Heart right ventricle (tissue), 16 donors: ENCODE measurements at regions of chr18 and their contacts with region 1.

Region 1: GRCh38 chr18:45248240-45248903 is 366.9 kb upstream of the SLC14A2 start:
- DNase-seq: peak in 1 of 2 donors; percentile 62
- ATAC-seq: peak; percentile 59 to 93 (median 85)
- H3K4me3 ChIP-seq: no peak overlapping the region
- H3K27ac ChIP-seq: peak overlapping the region; percentile 19 to 89 (median 76)
- H3K4me1 ChIP-seq: peaks cover 7 to 56% (median 44%) of the 10 kb centered on the region in 9 donors
- H3K27me3 ChIP-seq: no peaks in the 10 kb centered on the region
- CTCF ChIP-seq: no peak

Region 2: GRCh38 chr18:45320724-45321123 is 72.4 kb after region 1 on chr18:
- intact Hi-C with region 1: loop called in 1 of 10 experiments (anchors 2 kb)
- DNase-seq: no peak
- ATAC-seq: peak in 3 of 8 donors; percentile 9 to 38 (median 12)
- H3K4me3 ChIP-seq: no peak overlapping the region
- H3K27ac ChIP-seq: no peak overlapping the region
- H3K4me1 ChIP-seq: peaks cover 0 to 22% (median 7%) of the 10 kb centered on the region in 9 donors
- H3K27me3 ChIP-seq: no peaks in the 10 kb centered on the region
- CTCF ChIP-seq: no peak

Region 3: GRCh38 chr18:45517181-45517741 is 268.9 kb after region 1 on chr18:
- intact Hi-C with region 1: loop called in 1 of 10 experiments (anchors 10 kb)
- DNase-seq: peak in 1 of 2 donors; percentile 41
- ATAC-seq: peak; percentile 42 to 85 (median 70)
- H3K4me3 ChIP-seq: no peak overlapping the region
- H3K27ac ChIP-seq: peak overlapping the region in 8 of 10 donors; percentile 22 to 79 (median 44)
- H3K4me1 ChIP-seq: peaks cover 0 to 31% (median 10%) of the 10 kb centered on the region in 9 donors
- H3K27me3 ChIP-seq: no peaks in the 10 kb centered on the region
- CTCF ChIP-seq: no peak